CD4-positive, alpha-beta memory T cell (primary cell): ENCODE measurements at regions of chr22 and their contacts with region 1.

Region 1: DNA sequence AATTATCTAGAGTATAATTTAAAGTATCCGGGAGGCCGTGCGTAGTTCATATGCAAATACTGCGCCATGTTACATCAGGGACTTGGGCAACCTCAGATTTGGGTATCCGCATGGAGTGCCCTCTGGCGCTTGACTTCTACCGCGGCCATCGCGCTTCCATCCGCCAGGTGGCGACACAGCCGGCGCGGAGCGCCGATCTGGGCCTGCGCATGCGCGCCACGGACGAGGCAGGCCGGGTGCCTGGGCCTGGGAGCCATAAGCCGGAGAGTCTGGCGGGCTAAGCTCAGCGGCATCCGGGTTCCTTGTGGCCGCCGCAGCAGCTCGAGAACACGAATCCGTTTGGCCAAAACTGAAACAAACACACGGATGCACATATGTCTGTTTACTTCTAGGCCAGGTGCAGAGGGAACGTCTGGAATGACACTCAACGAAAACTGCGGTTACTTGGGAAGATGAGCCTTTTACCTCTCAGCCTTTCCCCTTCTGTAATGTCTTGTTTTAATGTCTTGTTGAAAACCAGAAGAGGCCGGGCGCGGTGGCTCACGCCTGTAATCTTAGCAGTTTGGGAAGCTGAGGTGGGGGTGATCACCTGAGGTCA is 21.9 kb downstream of the SNU13 start:
- DNase-seq: peak; percentile 91 to 97 (median 96)
- H3K4me3 ChIP-seq: peak overlapping the region in 1 of 2 donors; percentile 39
- H3K4me3 Mint-ChIP-seq: peak overlapping the region; percentile 86 to 94 (median 88)
- H3K27ac ChIP-seq: peak overlapping the region; percentile 80
- H3K27ac Mint-ChIP-seq: peak overlapping the region; percentile 97 to 99 (median 98)
- H3K4me1 ChIP-seq: peaks cover 14% of the 10 kb centered on the region
- H3K4me1 Mint-ChIP-seq: peaks cover 4 to 14% (median 11%) of the 10 kb centered on the region in 4 donors
- H3K27me3 ChIP-seq: no peaks in the 10 kb centered on the region
- H3K27me3 Mint-ChIP-seq: no peaks in the 10 kb centered on the region

Region 2: GRCh38 chr22:41656556-41656955 is 10.2 kb before region 1 on chr22:
- CTCF ChIA-PET with region 1: interaction called, 54 read pairs
- POLR2A ChIA-PET with region 1: interaction called, 5 read pairs
- intact Hi-C with region 1: no loop called
- DNase-seq: no peak
- H3K4me3 ChIP-seq: no peak overlapping the region
- H3K4me3 Mint-ChIP-seq: no peak overlapping the region
- H3K27ac ChIP-seq: no peak overlapping the region
- H3K27ac Mint-ChIP-seq: peak overlapping the region in 1 of 7 donors; percentile 48
- H3K4me1 ChIP-seq: no peaks in the 10 kb centered on the region
- H3K4me1 Mint-ChIP-seq: peaks cover 0 to 2% (median 0%) of the 10 kb centered on the region in 4 donors
- H3K27me3 ChIP-seq: no peaks in the 10 kb centered on the region
- H3K27me3 Mint-ChIP-seq: no peaks in the 10 kb centered on the region

Region 3: GRCh38 chr22:41682033-41682807 is 15.5 kb after region 1 on chr22:
- CTCF ChIA-PET with region 1: interaction called, 39 read pairs
- POLR2A ChIA-PET with region 1: interaction called, 68 read pairs
- intact Hi-C with region 1: loop called (anchors 1 kb)
- DNase-seq: peak; percentile 84 to 89 (median 85)
- H3K4me3 ChIP-seq: peak overlapping the region; percentile 23 to 57
- H3K4me3 Mint-ChIP-seq: peak overlapping the region; percentile 95 to 100 (median 98)
- H3K27ac ChIP-seq: peak overlapping the region; percentile 86
- H3K27ac Mint-ChIP-seq: peak overlapping the region; percentile 98 to 100 (median 99)
- H3K4me1 ChIP-seq: peaks cover 48% of the 10 kb centered on the region
- H3K4me1 Mint-ChIP-seq: peaks cover 15 to 54% (median 33%) of the 10 kb centered on the region in 4 donors
- H3K27me3 ChIP-seq: no peaks in the 10 kb centered on the region
- H3K27me3 Mint-ChIP-seq: no peaks in the 10 kb centered on the region

Region 4: GRCh38 chr22:41688365-41689211 is 21.8 kb after region 1 on chr22 and contains the start of gene SNU13:
- CTCF ChIA-PET with region 1: interaction called, 39 read pairs
- POLR2A ChIA-PET with region 1: interaction called, 68 read pairs
- intact Hi-C with region 1: loop called (anchors 1 kb)
- DNase-seq: peak; percentile 91 to 95 (median 92)
- H3K4me3 ChIP-seq: peak within 1 kb of the TSS; percentile 75 to 96
- H3K4me3 Mint-ChIP-seq: peak within 1 kb of the TSS; percentile 94 to 99 (median 97)
- H3K27ac ChIP-seq: peak within 1 kb of the TSS; percentile 95
- H3K27ac Mint-ChIP-seq: peak within 1 kb of the TSS; percentile 95 to 99 (median 98)
- H3K4me1 ChIP-seq: peaks cover 37% of the 10 kb centered on the region
- H3K4me1 Mint-ChIP-seq: peaks cover 21 to 48% (median 33%) of the 10 kb centered on the region in 4 donors
- H3K27me3 ChIP-seq: no peaks in the 10 kb centered on the region
- H3K27me3 Mint-ChIP-seq: no peaks in the 10 kb centered on the region
- total RNA-seq, gene SNU13: 123 to 129 TPM

Region 5: DNA sequence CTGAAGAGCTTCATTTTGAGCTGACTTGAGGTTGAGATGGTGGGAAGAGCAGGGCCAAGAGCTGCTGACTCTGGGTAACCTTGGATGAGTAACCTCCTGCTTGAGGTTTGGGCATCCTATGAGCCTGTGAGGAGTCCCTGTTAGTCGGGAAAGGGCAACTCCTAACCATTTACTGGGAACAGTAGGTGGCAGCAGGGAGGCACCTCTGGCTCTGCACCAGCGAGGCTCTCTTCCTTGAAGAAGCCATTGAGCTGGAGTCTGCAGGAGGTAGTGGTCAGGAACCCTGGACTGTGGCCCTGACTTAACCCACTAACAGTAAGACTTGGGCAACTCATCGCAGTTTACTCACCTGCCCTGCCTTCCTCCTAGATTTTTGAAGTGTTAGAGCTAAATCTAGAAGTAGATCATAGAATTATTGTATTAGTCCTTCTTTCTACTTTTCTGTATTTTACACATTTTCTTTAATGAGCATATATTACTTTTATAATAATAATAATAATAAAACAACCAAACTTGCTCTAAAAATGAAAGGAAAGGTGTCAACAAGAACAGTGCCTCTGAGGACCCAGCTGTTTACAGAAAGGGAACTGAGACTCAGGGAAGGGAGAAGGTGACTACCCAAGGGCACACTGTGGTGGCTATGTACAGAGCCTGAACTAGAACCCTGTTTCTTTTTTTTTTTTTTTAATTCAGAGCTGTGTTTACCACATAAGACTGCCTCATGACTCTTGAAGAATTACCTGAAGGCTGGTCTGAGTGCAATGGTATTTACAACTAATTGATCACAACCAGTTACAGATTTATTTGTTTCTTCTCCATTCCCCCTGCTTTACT is 80.0 kb after region 1 on chr22:
- CTCF ChIA-PET with region 1: interaction called, 11 read pairs
- POLR2A ChIA-PET with region 1: interaction called, 3 read pairs
- intact Hi-C with region 1: no loop called
- DNase-seq: peak; percentile 48 to 66 (median 51)
- H3K4me3 ChIP-seq: no peak overlapping the region
- H3K4me3 Mint-ChIP-seq: no peak overlapping the region
- H3K27ac ChIP-seq: no peak overlapping the region
- H3K27ac Mint-ChIP-seq: peak overlapping the region in 1 of 7 donors; percentile 2
- H3K4me1 ChIP-seq: no peaks in the 10 kb centered on the region
- H3K4me1 Mint-ChIP-seq: peaks cover 0 to 5% (median 1%) of the 10 kb centered on the region in 4 donors
- H3K27me3 ChIP-seq: no peaks in the 10 kb centered on the region
- H3K27me3 Mint-ChIP-seq: peaks cover 0 to 2% of the 10 kb centered on the region in 2 donors

Region 6: GRCh38 chr22:41757502-41757901 is 90.7 kb after region 1 on chr22:
- CTCF ChIA-PET with region 1: no interaction called
- POLR2A ChIA-PET with region 1: no interaction called
- intact Hi-C with region 1: no loop called
- DNase-seq: no peak
- H3K4me3 ChIP-seq: no peak overlapping the region
- H3K4me3 Mint-ChIP-seq: no peak overlapping the region
- H3K27ac ChIP-seq: no peak overlapping the region
- H3K27ac Mint-ChIP-seq: peak overlapping the region in 2 of 7 donors; percentile 48 to 79
- H3K4me1 ChIP-seq: no peaks in the 10 kb centered on the region
- H3K4me1 Mint-ChIP-seq: no peaks in the 10 kb centered on the region
- H3K27me3 ChIP-seq: no peaks in the 10 kb centered on the region
- H3K27me3 Mint-ChIP-seq: no peaks in the 10 kb centered on the region